Right ventricle myocardium inferior (tissue), 1 donor: ENCODE measurements at regions of chr19 and their contacts with region 1.

Region 1: DNA sequence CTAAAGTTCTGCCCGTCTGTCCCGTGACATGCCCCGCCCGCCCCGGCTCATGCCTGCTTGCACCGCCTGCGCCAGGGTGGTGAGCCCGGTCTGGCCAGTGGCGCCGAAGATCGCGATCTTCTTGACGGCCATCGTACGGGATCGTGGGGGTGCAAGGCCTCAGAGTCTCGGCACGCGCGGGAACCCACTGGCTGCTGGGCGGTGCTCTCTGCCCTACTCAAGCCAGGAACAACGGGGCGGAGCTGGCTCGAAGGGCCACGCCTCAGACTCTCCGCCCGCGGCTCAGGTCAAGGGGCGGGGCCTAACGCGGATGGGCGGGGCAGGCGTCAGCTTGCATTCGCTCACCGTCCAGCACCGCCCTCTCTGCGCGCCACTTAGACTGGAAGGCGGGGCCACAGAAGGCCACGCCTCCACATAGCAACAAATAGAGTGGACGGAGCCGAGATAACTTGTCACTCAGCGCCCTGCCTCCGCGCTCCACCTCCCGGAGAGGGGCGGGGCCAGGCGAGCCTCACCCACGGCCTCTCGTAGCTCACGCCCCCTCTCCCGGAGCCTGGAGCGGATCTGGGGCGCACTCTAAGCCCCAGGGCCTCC is at the start of gene BLVRB:
- DNase-seq: peak; percentile 100
- ATAC-seq: peak; percentile 97
- total RNA-seq, gene BLVRB: 127 TPM

Region 2: DNA sequence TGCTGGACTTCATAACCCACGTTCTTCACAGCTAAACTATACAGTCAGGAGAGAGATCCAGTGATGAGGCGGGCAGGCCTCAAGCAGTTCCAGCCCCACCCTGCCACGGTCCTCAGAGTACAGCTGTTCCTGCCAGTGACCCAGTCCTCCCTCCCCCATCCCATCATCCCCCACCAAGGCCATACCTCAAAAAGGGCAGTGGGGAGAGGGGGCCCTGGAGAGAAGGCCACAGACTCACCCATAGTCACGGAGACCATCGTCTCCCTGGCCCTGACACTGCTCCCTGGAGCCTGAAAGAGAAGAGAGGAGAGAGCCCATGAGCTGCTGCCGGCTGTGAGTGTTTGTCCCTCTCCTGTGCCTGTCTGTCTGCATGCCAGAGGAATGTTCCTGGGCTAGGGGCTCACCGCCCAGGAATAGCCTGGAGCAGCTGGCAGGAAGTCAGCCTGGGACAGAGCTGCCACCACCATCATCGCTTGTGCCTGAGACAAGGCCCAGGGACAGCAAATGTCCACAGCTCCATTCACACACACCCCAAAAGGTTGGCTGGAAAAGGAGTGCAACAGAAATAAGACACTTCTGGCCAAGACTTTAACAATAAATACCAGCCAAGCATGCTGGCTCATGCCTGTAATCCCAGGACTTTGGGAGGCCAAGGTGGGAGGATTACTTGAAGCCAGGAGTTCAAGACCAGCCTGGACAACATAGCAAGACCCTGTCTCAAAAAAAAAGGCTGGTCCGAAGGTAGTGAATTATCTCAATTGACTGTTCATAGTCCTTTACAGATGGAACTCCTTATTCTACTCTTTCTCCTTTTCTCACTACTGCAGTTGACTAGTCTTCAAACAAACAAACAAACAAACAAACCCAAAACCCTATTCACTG is 123.8 kb before region 1 on chr19:
- intact Hi-C with region 1: loop called (anchors 2 kb)
- DNase-seq: peak; percentile 84
- ATAC-seq: peak; percentile 94

Region 3: DNA sequence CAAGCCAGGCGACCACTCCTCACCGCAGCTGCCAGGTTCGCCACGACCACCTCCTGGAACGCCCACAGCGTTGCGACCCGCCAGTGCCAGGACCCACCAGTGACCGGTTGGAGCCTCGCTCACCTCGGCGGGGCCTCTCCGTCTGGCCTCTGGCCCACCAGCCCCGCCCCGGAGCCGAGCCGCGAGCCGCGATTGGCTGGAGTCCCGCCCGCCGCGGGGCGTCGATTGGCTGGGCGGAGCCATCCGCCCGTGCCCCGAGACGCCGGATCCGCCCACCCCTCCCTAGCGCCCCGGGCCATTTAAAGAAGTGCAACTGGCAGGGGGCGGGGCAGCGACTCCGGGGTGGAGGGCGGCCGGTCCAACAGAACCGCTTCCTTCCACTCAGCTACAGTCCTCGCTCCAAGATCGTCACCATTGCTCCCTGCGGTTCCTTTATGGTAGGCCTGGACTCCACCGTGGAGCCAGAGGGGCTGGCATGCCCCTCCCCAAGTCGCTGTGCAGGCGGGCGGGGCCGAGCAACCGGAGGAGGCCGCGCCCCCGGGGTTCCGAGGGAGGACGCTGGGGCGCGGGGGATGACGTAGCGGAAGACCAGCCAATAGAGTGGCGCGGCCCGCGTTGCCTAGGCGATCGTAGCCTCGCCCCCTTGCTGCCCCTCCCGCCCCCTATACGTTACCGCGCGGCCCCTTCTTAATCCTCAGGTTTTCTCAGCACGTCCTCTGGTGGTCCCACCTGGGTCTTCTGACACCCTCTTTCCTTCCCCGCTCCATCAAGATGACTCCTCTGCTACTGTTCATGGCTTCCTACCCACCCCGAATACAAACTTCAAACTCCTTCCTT is 21.2 kb before region 1 on chr19 and contains the start of gene SERTAD3:
- intact Hi-C with region 1: loop called (anchors 1 kb)
- DNase-seq: peak; percentile 99
- ATAC-seq: peak; percentile 84
- total RNA-seq, gene SERTAD3: 28.2 TPM

Region 4: DNA sequence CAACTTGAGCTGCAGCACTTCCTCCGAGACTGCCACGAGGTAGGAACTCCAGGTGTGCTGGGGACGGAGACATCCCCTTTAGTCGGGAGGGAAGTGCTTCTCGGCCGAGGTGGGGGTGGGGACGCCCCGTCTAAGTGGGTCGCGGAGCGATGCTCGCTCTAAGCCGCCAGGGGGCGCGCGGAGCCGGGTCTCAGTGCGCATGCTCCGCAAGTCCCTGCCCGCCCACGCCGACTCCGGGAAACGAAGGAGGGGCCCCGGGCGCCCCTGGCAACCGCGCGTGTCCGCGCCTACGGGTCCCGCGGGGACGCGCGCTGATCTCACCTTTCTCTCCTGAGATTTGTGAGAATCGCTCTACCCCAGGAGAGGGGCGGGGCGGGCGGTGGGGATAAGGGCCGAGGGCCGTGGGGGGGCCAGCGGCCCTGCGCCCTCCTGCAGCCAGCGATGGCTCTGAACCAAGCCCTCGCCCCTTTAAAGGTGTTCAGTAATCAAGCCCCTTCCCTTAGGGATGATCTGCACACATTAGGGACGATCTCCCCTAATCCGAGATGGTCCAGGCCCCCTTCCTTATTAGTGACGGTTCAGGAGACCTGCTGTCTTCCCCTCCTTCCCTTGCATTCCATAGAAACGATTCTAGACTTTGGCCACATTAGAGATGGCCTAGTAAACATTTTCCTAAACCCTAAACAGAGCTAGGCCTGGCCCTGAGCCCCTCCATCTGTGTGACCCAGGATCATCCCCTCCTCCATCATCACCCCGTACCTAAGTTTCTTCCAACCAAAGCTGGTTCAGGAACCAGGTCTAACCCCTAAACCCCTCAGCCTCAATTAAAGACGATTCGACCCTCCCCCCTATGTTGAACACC is 63.7 kb after region 1 on chr19:
- intact Hi-C with region 1: no loop called
- DNase-seq: peak; percentile 92
- ATAC-seq: peak; percentile 84